Right ventricle myocardium inferior (tissue), 1 donor: ENCODE measurements at regions of chr11 and their contacts with region 1.

Region 1: GRCh38 chr11:12281571-12282478 is 95.5 kb upstream of the PARVA start:
- DNase-seq: peak; percentile 88
- ATAC-seq: peak; percentile 71

Region 2: GRCh38 chr11:11798586-11799438 is 483.0 kb before region 1 on chr11:
- intact Hi-C with region 1: loop called (anchors 5 kb)
- DNase-seq: peak; percentile 88
- ATAC-seq: peak; percentile 84

Region 3: GRCh38 chr11:11931461-11932055 is 350.3 kb before region 1 on chr11:
- intact Hi-C with region 1: loop called (anchors 5 kb)
- DNase-seq: no peak
- ATAC-seq: peak; percentile 60

Region 4: DNA sequence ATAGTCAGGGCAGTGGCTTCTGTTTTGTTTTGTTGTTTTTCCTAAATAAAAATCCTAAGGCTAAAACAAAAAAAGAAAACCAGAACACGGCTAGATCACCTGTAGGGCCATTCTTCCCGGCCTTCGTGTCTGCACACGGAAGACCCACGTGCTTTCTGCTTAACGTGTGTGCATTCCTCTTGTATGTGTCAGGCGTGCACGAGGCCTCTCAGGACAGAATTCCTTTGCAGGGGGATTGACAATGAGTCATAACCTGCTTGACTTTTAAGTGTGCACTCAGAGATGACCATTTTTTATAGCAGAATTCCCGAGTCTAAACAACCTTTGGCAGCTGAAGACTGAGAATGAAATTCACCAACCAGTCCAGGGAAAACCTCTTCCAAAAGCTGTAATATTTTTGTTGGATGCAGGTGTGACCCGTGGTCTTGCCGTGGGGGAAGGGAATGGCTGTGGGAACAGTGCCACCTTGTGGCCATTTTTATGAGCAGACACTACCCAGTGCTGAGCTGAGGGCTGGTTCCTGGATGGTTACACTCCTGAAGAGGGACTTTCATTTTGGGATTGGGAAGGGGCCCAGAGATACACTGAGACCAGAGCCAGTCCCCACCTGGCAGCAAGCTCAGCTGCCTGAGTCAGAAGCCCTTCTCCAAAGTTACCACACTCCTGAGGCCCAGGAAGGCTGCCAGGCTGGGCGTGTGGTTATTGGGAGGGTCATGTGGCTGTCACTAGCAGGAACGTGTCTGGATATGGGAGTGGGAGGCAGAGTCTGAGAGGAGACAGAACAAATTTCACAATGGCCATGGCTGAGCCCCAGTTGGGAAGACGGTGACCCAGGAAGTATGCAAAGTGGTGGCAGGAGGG is 237.6 kb before region 1 on chr11:
- intact Hi-C with region 1: loop called (anchors 1 kb)
- DNase-seq: peak; percentile 89
- ATAC-seq: peak; percentile 89

Region 5: DNA sequence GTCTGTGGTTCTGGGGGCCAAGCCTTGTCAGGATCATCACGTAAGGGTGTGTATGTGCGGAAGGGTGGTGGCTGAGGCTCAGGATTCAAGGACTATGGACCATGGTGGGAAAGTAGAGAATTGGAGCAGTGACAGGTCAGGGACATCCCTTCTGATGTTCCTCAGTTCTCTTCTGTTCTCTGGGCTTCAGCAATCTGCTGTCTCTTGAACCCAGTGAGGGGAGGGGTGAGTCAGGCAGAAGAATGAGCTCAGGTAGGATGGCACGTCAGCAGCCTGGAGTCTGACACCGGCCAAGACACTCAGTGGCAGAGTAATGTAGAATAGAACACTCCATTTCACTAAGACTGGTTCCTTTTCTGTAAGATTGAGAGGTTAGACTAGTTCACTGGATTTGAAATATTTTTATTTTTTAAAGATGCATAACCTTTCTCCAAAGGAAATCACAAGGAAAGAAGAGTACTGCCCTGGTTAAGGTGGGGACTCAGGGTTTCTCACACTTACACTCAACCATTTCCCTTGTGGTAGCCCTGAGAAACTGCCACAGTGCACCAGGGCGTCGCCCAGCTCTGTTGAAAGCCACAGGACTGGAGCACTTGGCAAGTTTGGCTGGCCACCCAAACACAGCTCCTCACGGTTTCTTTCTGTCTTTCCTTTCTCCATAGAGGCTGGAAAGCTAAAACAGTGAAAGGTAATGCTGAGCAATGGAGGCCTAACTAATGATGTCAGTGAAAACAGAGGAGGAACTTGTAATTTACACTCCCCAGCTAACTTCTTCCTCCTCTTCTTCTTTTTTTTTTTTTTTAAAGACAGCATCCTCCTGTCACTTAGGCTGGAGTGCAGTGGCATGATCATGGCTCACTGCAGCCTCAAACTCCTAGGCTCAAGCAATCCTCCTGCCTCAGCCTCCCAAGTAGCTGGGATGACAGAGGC is 194.5 kb before region 1 on chr11:
- intact Hi-C with region 1: loop called (anchors 2 kb)
- DNase-seq: no peak
- ATAC-seq: no peak

Region 6: GRCh38 chr11:12235947-12236743 is 45.7 kb before region 1 on chr11:
- intact Hi-C with region 1: loop called (anchors 5 kb)
- DNase-seq: no peak
- ATAC-seq: no peak